ENCODE measurements at regions of chr9 and their contacts with region 1.

Region 1: DNA sequence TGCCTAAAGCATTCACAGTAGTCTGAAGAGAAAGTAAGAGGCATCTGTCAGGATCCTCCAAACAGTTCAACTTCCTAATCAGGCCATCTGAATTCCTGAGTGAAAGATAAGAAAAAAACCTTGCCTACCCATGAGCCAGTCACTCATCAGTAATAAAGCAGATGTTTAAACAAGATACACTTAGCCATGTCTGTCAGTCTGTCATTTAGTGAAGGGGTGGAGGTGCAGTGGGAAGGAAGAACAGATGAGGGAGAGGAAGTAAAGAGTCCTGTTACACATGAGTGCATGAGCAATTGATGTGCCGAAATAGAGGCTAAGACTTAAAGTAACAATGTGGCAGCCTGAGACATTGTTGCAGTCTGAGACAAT is 29.9 kb upstream of the DMRTA1 start:
- DNase-seq: no peak
- ATAC-seq: no peak

Region 2: DNA sequence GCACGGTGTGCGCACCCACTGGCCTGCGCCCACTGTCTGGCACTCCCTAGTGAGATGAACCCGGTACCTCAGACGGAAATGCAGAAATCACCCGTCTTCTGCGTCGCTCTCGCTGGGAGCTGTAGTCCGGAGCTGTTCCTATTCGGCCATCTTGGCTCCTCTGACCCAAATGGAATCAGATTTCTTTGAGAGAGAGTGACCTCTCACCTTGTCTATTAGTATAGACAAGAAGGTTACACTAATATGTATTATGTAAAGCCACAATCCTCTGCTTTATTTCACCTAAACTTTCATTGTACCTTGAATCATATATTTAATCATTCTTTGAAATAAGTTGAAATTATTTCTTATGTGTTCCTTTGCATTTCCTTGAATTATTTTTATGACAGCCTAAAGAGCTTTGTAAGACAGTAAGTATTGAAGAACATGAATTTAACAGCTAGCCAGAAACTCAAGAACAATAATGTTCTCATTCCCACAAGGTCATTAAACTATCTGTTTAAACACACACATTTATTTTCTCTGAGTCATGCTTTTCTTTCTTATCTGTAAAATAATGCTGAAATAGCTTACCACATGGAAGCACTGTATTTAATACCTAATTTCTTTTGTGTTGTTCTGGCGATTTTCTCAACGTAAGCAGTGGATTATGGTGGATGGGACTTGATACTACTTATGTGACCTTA is 61.8 kb before region 1 on chr9:
- intact Hi-C with region 1: loop called (anchors 10 kb)
- DNase-seq: no peak
- ATAC-seq: no peak

Measured in left ventricle myocardium superior (tissue), 1 donor.